PC-3 (cell line): ENCODE measurements at regions of chr22 and their contacts with region 1.

Region 1: GRCh38 chr22:45309472-45310227 is at the start of gene FAM118A:
- DNase-seq: peak; percentile 91
- ATAC-seq: peak; percentile 86
- H3K4me3 ChIP-seq: peak within 1 kb of the TSS; percentile 95
- H3K27ac ChIP-seq: peak within 1 kb of the TSS; percentile 4; the same call in 1 of the 2 replicates
- H3K4me1 ChIP-seq: peaks cover 14% of the 10 kb centered on the region
- H3K27me3 ChIP-seq: no peaks in the 10 kb centered on the region
- CTCF ChIP-seq: no peak
- total RNA-seq, gene FAM118A: 19.6 and 20.3 TPM in 2 replicates

Region 2: DNA sequence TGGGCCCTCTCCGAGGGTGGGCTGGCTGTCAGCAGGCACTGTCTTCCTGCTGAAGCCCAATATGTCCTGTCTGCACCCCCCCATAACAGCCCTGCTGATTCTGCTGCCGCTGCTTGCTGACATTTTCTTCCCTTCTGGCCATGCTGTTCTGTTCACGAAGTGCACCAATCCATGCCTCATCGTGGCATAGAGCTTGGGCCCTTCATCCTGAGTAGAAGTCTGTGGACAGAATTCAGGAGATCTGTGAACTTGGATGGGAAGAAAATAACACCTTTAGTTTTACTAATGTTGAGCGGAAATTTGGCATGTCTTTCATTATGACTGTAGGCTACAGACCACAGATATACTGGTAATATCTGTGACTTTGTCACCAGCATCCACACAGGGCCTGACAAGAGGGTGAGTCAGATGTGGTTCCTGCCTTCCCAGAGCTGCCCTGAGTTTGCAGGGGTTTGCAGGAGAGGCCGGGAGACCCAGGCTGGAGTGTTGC is 54.8 kb before region 1 on chr22:
- CTCF ChIA-PET with region 1: no interaction called
- POLR2A ChIA-PET with region 1: no interaction called
- intact Hi-C with region 1: no loop called
- DNase-seq: peak; percentile 40
- ATAC-seq: peak; percentile 72
- H3K4me3 ChIP-seq: no peak overlapping the region
- H3K27ac ChIP-seq: no peak overlapping the region
- H3K4me1 ChIP-seq: 0 out of 2 replicates have a peak, but pooled peaks cover 6% of the 10 kb centered on the region
- H3K27me3 ChIP-seq: no peaks in the 10 kb centered on the region
- CTCF ChIP-seq: no peak

Region 3: DNA sequence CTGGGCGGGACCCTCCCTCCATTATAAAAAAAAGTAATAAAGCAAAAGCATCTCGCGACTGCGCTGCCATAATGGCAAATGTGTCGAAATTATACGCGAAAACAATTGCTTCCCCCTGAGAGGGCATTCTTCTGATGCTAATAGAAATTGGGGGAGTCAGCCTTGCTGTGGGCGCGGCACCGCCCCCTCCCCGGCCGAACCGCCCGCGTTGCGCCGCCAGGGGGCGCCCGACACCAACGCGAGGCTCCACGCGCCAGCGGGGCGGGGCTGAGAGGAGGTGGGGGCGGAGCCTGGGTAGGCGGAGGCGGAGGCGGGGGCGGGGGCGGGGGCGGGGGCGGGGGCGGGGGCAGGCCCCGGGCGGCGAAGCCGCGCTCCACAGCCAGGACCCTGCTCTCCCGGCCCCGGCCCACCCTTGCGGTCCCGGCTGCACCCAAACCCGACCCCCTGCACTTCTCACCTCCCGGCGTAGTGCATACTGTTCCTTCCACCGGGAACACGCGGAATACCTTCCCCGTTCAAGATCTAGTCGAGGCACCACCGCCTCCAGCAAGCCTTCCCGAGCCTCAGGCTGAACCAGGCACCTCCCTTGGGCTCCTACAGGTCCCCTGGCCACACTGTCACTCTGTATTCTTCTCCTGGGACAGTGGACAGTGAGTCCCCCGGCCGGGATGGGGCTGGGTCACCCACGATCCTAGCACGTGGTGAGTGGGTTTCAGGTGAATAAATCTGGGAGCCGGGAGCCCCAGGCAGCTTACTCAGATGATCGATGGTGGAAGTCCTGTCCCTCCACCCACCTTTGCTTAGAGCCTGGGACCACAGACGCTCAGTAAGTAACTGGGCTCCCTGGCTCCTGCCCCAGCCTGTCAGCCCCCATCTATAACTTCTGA is 40.4 kb before region 1 on chr22:
- CTCF ChIA-PET with region 1: no interaction called
- POLR2A ChIA-PET with region 1: no interaction called
- intact Hi-C with region 1: loop called (anchors 2 kb)
- DNase-seq: peak; percentile 78
- ATAC-seq: peak; percentile 79
- H3K4me3 ChIP-seq: peak overlapping the region; percentile 74
- H3K27ac ChIP-seq: no peak overlapping the region
- H3K4me1 ChIP-seq: peaks cover 6% of the 10 kb centered on the region
- H3K27me3 ChIP-seq: no peaks in the 10 kb centered on the region
- CTCF ChIP-seq: peak; percentile 71

Region 4: DNA sequence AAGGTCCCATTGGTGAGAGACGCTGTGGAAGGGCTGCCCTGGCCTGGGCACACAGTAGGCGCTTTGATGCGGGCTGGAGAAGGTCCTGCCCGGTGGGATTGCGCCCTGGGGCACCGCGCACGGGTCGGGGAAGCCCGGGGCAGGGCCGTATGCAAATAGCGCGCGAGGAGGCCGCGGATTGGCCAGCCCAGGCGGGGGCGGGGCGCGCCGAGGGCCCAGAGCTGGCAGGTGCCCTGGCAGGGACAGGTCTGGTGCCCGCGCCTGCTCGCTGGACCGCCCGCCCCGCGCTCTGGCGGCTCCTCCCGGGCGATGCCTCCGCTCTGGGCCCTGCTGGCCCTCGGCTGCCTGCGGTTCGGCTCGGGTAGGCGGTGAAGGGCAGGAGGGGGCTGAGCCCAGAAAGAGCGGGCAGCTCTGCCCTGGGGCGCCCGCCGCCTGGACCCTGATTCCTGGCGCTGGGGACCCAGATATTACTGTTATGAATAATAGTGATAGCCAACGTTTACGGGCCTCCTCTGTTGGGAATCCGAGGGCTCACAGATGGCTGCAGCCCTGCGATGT is 24.9 kb before region 1 on chr22 and contains the start of gene UPK3A:
- CTCF ChIA-PET with region 1: no interaction called
- POLR2A ChIA-PET with region 1: no interaction called
- intact Hi-C with region 1: loop called (anchors 2 kb)
- DNase-seq: peak; percentile 75
- ATAC-seq: peak; percentile 95
- H3K4me3 ChIP-seq: peak within 1 kb of the TSS; percentile 67
- H3K27ac ChIP-seq: no peak within 1 kb of the TSS
- H3K4me1 ChIP-seq: peaks cover 25% of the 10 kb centered on the region
- H3K27me3 ChIP-seq: no peaks in the 10 kb centered on the region
- CTCF ChIP-seq: no peak
- total RNA-seq, gene UPK3A: 1.1 TPM in 1 of 2 replicates, not detected in the other

Region 5: DNA sequence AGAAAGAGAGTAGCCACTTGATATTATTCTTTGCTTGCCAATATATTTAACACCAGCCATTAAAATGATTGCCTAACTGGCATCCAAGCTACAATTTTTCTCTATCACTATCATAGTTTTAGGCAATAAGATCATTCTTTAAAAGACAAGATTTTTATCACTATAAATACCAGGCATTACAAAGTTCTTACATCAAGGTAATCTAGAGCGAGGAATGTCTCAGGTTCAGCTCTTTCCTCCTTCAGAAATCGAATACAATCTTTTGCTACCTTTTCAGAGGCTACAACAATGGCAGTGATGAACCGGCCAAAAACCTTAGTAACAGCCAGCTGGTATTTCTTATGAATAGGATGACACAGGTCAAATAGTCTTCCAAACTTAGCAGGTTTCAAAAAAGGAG is 79.9 kb after region 1 on chr22:
- CTCF ChIA-PET with region 1: no interaction called
- POLR2A ChIA-PET with region 1: no interaction called
- intact Hi-C with region 1: no loop called
- DNase-seq: no peak
- ATAC-seq: no peak
- H3K4me3 ChIP-seq: no peak overlapping the region
- H3K27ac ChIP-seq: no peak overlapping the region
- H3K4me1 ChIP-seq: no peaks in the 10 kb centered on the region
- H3K27me3 ChIP-seq: peaks cover 4% of the 10 kb centered on the region; the same call in 1 of the 2 replicates
- CTCF ChIP-seq: no peak